H1 (cell line): ENCODE measurements at regions of chr3 and their contacts with region 1.

Region 1: GRCh38 chr3:27712136-27713077 is 9.7 kb downstream of the EOMES start:
- DNase-seq: peak in 1 of 2 experiments; percentile 72
- H3K4me3 ChIP-seq: peak overlapping the region; percentile 10 to 57 (median 35); a peak in 7 of 8 replicates
- H3K27ac ChIP-seq: no peak overlapping the region
- H3K4me1 ChIP-seq: peaks cover 5 to 19% (median 18%) of the 10 kb centered on the region in 4 experiments
- H3K27me3 ChIP-seq: peaks cover 50 to 62% (median 56%) of the 10 kb centered on the region in 4 experiments
- CTCF ChIP-seq: peak; percentile 71 to 78 (median 78)
- EP300 ChIP-seq: no peak
- POLR2A ChIP-seq: no peak
- RAD21 ChIP-seq: peak; percentile 89 to 90

Region 2: GRCh38 chr3:27681245-27681748 is 31.1 kb before region 1 on chr3:
- CTCF ChIA-PET with region 1: interaction called, 16 read pairs
- POLR2A ChIA-PET with region 1: no interaction called
- DNase-seq: no peak
- H3K4me3 ChIP-seq: peak overlapping the region in 3 of 4 experiments; percentile 23 to 42 (median 24); a peak in 4 of 8 replicates
- H3K27ac ChIP-seq: peak overlapping the region; percentile 58
- H3K4me1 ChIP-seq: peaks cover 0 to 7% (median 1%) of the 10 kb centered on the region in 4 experiments; a peak in 2 of 7 replicates
- H3K27me3 ChIP-seq: no peaks in the 10 kb centered on the region
- CTCF ChIP-seq: peak in 2 of 3 experiments; percentile 37 to 69; a peak in 2 of 4 replicates
- EP300 ChIP-seq: no peak
- POLR2A ChIP-seq: no peak
- RAD21 ChIP-seq: peak; percentile 75 to 77

Region 3: DNA sequence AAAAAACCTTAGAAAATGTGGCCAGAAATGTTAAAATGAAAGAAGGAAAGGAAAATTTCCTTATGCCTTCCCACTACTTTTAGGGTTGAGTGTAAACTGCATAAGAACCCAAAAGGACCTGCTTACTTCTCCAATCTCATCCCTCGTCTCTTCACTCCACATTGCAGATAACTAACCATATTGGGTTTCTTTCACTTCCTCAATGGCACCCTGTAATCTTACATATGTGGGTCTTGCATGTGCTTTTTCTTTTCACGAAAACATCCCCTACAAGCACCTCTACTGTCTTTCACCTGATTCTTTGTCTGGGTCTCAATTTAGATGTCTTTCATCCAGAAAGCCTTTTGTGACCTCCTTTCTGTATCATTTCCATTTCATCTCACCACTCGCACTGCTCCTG is 13.3 kb before region 1 on chr3:
- CTCF ChIA-PET with region 1: interaction called, 13 read pairs
- POLR2A ChIA-PET with region 1: no interaction called
- DNase-seq: no peak
- H3K4me3 ChIP-seq: no peak overlapping the region
- H3K27ac ChIP-seq: no peak overlapping the region
- H3K4me1 ChIP-seq: no peaks in the 10 kb centered on the region
- H3K27me3 ChIP-seq: no peaks in the 10 kb centered on the region
- CTCF ChIP-seq: no peak
- EP300 ChIP-seq: no peak
- POLR2A ChIP-seq: no peak
- RAD21 ChIP-seq: no peak

Region 4: DNA sequence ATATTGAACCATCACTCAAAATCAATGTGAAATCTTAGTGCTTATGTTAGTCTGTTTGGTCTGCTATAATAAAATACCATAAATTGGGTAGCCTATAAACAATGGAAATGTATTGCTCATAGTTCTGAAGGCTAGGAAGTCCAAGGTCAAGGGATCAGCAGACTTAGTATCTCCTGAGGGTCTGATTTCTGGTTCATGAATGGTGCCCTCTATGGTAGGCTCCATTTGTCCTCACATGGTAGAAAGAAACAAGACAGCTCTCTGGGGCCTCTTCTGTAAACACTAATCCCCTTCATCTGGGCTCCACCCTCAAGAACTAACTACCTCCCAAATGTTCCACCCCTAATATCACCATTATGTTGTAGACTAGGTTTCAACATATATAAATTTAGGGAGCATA is 24.7 kb after region 1 on chr3:
- CTCF ChIA-PET with region 1: interaction called, 11 read pairs
- POLR2A ChIA-PET with region 1: no interaction called
- DNase-seq: no peak
- H3K4me3 ChIP-seq: no peak overlapping the region
- H3K27ac ChIP-seq: no peak overlapping the region
- H3K4me1 ChIP-seq: peaks cover 0 to under 1% (median 0%) of the 10 kb centered on the region in 4 experiments; a peak in 1 of 7 replicates
- H3K27me3 ChIP-seq: peaks cover 8 to 17% (median 16%) of the 10 kb centered on the region in 4 experiments
- CTCF ChIP-seq: no peak
- EP300 ChIP-seq: no peak
- POLR2A ChIP-seq: no peak
- RAD21 ChIP-seq: no peak

Region 5: DNA sequence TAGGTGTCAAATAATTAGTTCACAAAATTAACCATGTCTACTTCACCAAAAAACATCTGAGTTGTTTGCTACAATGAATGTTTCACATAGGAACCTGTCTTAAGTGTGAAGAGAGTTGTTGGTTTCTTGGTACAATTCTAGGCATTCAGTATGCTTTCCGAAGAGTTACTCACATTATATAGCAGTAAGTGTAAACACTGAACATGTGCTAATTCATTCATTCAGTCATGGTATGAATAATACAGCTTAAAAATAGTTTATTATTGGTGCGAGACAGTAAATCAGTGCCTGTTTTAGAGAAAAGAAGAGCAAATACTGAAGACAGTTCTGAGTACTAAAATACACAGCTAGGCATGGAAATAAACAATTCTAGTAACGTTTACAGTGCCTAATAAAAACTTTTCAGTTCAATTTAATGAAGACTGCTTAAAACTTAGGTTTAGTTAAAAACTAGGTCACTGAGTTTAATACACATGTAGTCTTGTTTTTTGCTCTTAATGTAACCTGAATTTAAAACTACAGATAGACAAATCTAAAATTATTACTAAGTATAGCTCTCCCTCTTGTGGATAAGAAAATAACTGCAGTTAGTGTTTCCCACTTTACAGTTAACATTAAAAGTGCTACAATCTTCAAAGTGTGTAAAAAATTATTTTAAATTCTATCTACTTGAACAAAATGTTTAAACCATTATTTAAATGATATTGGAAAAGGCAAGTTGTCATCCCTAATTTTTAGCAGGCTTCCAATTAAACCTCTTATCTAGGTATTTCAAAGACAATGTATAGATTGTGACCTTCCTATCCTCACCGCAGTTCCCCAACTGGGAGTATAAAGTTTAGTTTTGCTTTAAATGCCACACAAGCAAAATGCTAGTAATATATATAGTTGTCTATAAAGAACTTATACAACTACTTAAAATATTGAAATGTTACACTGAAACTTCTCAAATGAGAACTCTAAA is 616.1 kb after region 1 on chr3:
- CTCF ChIA-PET with region 1: interaction called, 41 read pairs
- POLR2A ChIA-PET with region 1: no interaction called
- DNase-seq: no peak
- H3K4me3 ChIP-seq: no peak overlapping the region
- H3K27ac ChIP-seq: no peak overlapping the region
- H3K4me1 ChIP-seq: no peaks in the 10 kb centered on the region
- H3K27me3 ChIP-seq: no peaks in the 10 kb centered on the region
- CTCF ChIP-seq: peak in 2 of 3 experiments; percentile 10 to 43; a peak in 2 of 4 replicates
- EP300 ChIP-seq: no peak
- POLR2A ChIP-seq: no peak
- RAD21 ChIP-seq: peak in 1 of 2 experiments; percentile 68